PC-9 (cell line): ENCODE measurements at regions of chr13 and their contacts with region 1.

Region 1: DNA sequence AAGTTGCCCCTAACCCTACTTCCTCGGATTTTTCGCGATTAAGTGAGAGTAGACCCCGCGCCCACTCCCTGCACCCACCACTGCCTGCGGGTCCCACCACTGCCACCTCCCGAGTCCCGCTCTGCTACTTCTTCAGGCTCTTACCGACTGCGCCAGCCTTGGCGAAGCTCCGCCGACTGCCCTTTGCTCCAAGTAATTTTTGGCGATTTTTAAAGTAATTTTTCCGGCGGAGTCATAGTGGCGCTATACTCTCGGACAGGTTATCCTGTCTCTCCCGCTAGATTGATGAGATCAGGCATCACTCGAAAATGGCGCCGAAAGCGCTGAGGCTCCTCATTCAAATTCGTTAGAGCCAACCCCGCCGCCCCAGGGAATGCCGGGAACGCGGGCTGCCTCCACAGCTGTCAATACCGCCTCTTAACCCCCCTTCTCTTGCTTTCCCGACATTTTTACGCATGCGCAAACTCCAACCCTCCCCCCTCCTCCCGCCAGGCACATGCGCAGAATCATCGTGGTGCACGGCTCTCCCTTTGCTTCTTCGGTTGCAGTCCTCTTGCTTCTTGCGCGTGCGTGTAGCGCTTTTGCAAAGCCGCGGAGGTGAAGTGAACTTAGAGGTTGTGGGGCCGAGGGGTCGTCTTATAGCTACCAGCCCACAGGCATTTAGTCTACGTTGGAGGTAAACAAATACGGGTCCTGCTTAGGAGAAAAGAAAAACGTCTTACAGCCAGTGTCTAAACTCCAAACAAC is 66.6 kb downstream of the KCNRG start:
- DNase-seq: peak; percentile 95 to 98
- H3K4me3 ChIP-seq: peak overlapping the region; percentile 87
- H3K27ac ChIP-seq: peak overlapping the region; percentile 76
- H3K4me1 ChIP-seq: peaks cover 46% of the 10 kb centered on the region
- H3K27me3 ChIP-seq: no peaks in the 10 kb centered on the region
- CTCF ChIP-seq: no peak

Region 2: GRCh38 chr13:49443704-49444523 is 637.9 kb before region 1 on chr13 and contains the starts of genes CAB39L and SETDB2:
- CTCF ChIA-PET with region 1: interaction called, 13 read pairs
- POLR2A ChIA-PET with region 1: no interaction called
- intact Hi-C with region 1: no loop called
- DNase-seq: peak; percentile 97 to 99
- H3K4me3 ChIP-seq: peak within 1 kb of the TSS; percentile 77
- H3K27ac ChIP-seq: peak within 1 kb of the TSS; percentile 71
- H3K4me1 ChIP-seq: peaks cover 6% of the 10 kb centered on the region; the same call in 1 of the 2 replicates
- H3K27me3 ChIP-seq: no peaks in the 10 kb centered on the region
- CTCF ChIP-seq: peak; percentile 35; the same call in 1 of the 2 replicates
- total RNA-seq, gene CAB39L: 10.2 and 10.7 TPM in 2 replicates
- total RNA-seq, gene SETDB2: 5.2 and 6.9 TPM in 2 replicates

Region 3: GRCh38 chr13:49996951-49997895 is 84.6 kb before region 1 on chr13 and contains the start of gene TRIM13:
- CTCF ChIA-PET with region 1: no interaction called
- POLR2A ChIA-PET with region 1: no interaction called
- intact Hi-C with region 1: loop called (anchors 2 kb)
- DNase-seq: peak; percentile 73 to 83
- H3K4me3 ChIP-seq: peak within 1 kb of the TSS; percentile 98
- H3K27ac ChIP-seq: peak within 1 kb of the TSS; percentile 93
- H3K4me1 ChIP-seq: peaks cover 13% of the 10 kb centered on the region
- H3K27me3 ChIP-seq: no peaks in the 10 kb centered on the region
- CTCF ChIP-seq: peak; percentile 78
- total RNA-seq, gene TRIM13: 13.4 and 15.1 TPM in 2 replicates

Region 4: DNA sequence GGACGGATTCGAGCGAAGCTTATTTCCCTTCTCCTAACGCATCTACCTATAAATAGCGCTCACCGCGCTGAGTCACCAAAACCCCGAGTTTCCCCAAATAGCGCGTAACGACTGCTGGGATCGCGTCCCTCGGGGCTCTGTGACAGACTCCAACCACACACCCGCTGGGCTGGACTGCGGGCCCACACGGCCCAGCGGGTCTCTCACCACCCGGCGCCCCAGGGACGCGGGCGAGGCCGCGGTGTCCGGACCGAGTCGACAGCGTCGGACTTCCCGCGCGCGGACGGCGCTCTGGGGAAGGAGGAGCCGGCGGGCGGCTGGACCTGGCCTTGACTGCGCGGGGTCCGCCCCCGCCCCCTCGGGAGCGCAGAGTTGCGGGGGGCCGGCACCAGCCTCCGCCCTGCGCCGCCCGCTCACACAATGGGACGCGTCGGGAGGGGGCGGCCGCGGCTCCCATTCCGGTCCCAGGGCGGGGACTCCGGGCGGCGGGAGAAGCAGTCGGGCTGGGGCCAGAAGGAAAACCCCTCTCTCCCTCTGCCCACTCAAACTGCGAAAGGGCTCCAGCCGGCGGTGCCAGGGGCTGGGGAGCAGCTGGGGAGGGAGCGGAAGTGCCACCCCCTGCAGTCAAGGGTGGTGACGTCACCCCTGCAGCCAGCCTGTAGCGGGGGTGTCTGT is 42.1 kb after region 1 on chr13:
- CTCF ChIA-PET with region 1: no interaction called
- POLR2A ChIA-PET with region 1: no interaction called
- intact Hi-C with region 1: loop called (anchors 1 kb)
- DNase-seq: peak; percentile 82 to 93
- H3K4me3 ChIP-seq: peak overlapping the region; percentile 91
- H3K27ac ChIP-seq: peak overlapping the region; percentile 80
- H3K4me1 ChIP-seq: peaks cover 24% of the 10 kb centered on the region
- H3K27me3 ChIP-seq: no peaks in the 10 kb centered on the region
- CTCF ChIP-seq: no peak

Region 5: DNA sequence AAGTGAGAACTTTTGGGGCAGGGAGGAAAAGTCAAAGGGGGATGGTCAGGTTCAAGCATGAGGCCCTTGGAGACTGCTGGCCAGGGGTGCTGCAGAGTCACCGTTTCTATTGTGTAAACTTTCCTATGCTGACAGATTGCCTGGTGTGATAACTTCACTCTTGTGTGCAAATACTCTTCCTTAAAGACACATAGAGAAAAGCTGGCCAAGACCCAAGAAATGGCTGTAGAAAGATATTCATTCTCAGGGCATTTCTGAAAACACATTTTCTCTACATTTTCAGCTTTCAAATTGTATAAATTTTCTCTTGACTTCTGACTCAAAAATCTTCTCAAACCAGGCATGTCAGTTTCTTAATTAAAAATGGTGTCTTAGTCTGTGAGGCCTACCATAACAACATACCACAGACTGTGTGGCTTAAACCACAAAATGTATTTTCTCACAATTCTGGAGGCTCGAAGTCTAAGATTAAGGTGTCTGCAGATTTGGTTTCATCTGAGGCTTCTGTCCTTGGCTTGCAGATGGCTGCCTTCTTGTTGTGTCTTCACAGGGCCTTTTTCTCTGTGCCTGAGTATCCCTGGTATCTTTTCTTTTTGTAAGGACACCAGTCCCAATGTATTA is 237.9 kb after region 1 on chr13:
- CTCF ChIA-PET with region 1: no interaction called
- POLR2A ChIA-PET with region 1: no interaction called
- intact Hi-C with region 1: loop called (anchors 5 kb)
- DNase-seq: peak; percentile 49 to 77
- H3K4me3 ChIP-seq: no peak overlapping the region
- H3K27ac ChIP-seq: peak overlapping the region; percentile 77
- H3K4me1 ChIP-seq: peaks cover 42% of the 10 kb centered on the region
- H3K27me3 ChIP-seq: no peaks in the 10 kb centered on the region
- CTCF ChIP-seq: no peak

Region 6: DNA sequence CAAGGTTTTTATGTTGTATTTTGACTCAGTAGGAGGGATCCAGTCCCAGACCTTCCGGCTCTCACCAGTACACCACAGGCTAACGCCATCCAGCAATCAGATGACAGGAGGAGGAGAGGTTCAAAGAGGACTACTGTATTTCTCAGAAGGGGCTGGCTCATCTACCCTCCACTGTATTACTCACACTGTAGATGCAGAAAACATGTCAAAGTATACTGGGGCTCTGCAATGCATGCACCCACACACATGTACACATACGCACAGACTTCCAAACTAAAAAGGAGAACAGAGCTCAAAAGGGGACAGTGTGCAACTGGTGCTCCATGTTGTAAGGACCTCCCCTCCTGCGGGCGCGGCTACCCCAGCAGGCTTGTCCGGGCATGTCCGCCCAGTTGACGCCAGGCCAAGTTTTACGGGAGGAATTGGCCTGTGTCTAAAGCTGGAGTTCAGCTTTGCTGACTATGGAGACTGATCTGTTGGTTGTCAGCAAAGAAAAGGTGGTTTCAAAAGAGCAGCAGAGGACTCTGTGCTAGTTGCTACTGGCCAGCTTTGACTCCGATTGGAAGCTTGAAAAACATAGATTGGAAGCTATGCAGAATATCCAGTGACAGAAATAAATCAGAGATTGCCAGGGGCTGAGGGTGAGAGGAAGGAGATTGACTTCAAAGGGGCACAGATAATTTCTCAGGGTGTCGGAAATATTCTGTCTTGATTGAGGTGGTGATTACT is 447.5 kb after region 1 on chr13:
- CTCF ChIA-PET with region 1: no interaction called
- POLR2A ChIA-PET with region 1: no interaction called
- intact Hi-C with region 1: loop called (anchors 1 kb)
- DNase-seq: peak in 1 of 2 experiments; percentile 67
- H3K4me3 ChIP-seq: no peak overlapping the region
- H3K27ac ChIP-seq: no peak overlapping the region
- H3K4me1 ChIP-seq: no peaks in the 10 kb centered on the region
- H3K27me3 ChIP-seq: no peaks in the 10 kb centered on the region
- CTCF ChIP-seq: no peak

Region 7: DNA sequence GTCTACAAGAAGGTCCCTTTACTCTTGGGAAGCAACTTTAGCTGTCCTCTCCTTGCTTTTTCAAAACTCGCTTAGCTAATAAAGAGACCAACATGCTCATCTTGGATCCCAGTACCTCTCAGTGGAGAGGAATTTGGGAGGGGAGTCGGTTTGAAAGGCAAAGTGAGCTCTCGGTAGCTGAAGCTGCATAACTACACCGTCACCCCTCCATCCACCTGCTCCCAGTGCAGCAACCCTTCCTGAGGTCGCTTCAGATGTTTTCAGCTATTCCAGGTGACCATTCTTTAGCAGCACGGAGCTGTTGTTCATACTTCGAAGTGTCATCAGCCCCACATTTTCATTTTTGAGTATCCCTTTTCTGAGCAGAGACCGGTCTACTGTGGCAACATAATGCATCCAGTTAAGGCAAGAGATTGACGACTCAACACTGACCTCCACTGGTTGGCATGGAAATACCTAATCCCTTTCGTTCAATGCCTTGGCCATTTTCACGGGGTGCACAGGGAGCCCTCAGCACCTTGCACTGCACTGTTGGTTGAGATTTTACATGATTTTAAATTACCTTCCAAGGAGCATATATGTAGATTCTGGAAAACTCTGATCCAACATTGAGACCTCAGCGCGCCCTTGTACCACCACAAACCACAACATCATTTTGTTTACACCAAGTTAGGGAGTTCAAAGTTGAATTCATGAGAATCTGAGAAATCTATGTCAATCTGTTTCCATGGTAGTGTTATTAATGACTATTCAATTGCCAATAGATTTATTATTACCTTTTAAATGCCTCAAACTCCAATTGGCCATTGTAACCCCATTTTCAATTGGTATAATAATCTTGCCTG is 719.5 kb after region 1 on chr13:
- CTCF ChIA-PET with region 1: no interaction called
- POLR2A ChIA-PET with region 1: no interaction called
- intact Hi-C with region 1: loop called (anchors 1 kb)
- DNase-seq: peak in 1 of 2 experiments; percentile 47
- H3K4me3 ChIP-seq: no peak overlapping the region
- H3K27ac ChIP-seq: no peak overlapping the region
- H3K4me1 ChIP-seq: peaks cover 6% of the 10 kb centered on the region; the same call in 1 of the 2 replicates
- H3K27me3 ChIP-seq: no peaks in the 10 kb centered on the region
- CTCF ChIP-seq: peak; percentile 76